ENCODE measurements at regions of chrX and their contacts with region 1.

Region 1: GRCh38 chrX:11724122-11725017 is 33.7 kb upstream of the MSL3 start:
- DNase-seq: peak in 1 of 2 donors; percentile 4
- ATAC-seq: no peak
- H3K4me3 ChIP-seq: no peak overlapping the region
- H3K27ac ChIP-seq: no peak overlapping the region
- H3K4me1 ChIP-seq: no peaks in the 10 kb centered on the region
- H3K27me3 ChIP-seq: peaks cover 0 to 11% (median 0%) of the 10 kb centered on the region in 7 donors
- CTCF ChIP-seq: peak; percentile 42 to 73 (median 64)

Region 2: GRCh38 chrX:11665144-11666111 is 58.9 kb before region 1 on chrX and contains the start of gene ARHGAP6:
- intact Hi-C with region 1: no loop called
- DNase-seq: peak; percentile 34 to 62
- ATAC-seq: peak; percentile 81 to 91 (median 87)
- H3K4me3 ChIP-seq: peak within 1 kb of the TSS; percentile 35 to 58 (median 50)
- H3K27ac ChIP-seq: peak within 1 kb of the TSS in 6 of 10 donors; percentile 10 to 50 (median 22)
- H3K4me1 ChIP-seq: peaks cover 0 to 3% (median 0%) of the 10 kb centered on the region in 9 donors
- H3K27me3 ChIP-seq: peaks cover 0 to 90% (median 4%) of the 10 kb centered on the region in 7 donors
- CTCF ChIP-seq: peak in 1 of 9 donors; percentile 10
- total RNA-seq, gene ARHGAP6: 1.6 to 6.0 (median 2.5) TPM

Region 3: GRCh38 chrX:11688201-11688600 is 36.2 kb before region 1 on chrX:
- intact Hi-C with region 1: no loop called
- DNase-seq: no peak
- ATAC-seq: no peak
- H3K4me3 ChIP-seq: no peak overlapping the region
- H3K27ac ChIP-seq: no peak overlapping the region
- H3K4me1 ChIP-seq: no peaks in the 10 kb centered on the region
- H3K27me3 ChIP-seq: peaks cover 0 to 18% (median 0%) of the 10 kb centered on the region in 7 donors
- CTCF ChIP-seq: no peak

Region 4: DNA sequence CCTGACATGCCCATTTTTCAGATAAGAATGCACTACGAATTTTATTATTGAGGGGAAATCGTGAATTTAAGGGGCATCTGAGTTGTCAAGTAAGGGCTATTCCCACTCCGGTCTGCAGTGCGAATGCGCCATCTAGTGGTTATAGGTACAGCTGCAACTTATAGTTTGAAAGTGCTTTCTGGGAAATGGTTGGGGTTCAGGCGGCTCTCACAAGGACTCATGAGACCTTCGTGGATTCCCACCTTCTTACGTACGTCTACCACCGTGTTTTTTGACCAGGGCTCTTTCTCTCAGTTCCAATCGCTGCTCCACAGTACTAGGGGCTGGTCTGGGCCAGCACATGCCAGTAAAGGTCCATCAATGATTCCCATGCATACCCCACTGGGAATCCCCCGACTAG is 46.0 kb after region 1 on chrX:
- intact Hi-C with region 1: loop called in 3 of 10 experiments (anchors 5 to 10 kb)
- DNase-seq: no peak
- ATAC-seq: peak in 7 of 8 donors; percentile 25 to 76 (median 63)
- H3K4me3 ChIP-seq: no peak overlapping the region
- H3K27ac ChIP-seq: no peak overlapping the region
- H3K4me1 ChIP-seq: peaks cover 0 to 7% (median 0%) of the 10 kb centered on the region in 9 donors
- H3K27me3 ChIP-seq: no peaks in the 10 kb centered on the region
- CTCF ChIP-seq: peak; percentile 47 to 88 (median 77)

Region 5: DNA sequence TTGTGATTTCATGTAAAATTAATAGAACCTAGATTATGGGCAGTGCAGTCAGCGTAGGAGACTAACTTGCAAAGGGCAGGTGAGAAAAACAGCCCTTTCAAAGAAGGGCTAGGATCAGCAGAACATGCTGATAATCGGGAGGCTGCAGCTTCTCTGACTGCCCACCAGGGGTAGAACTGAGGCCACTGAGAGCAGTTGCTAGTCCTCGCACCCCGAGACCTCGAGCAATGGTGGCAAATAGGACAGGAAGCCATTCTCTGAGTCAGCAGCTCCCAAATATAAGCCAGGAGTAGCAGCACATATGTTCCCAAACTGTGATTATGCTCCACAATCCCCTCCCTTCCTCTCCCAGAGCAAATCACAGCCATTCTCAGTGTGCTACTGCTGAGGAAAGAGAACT is 220.1 kb after region 1 on chrX:
- intact Hi-C with region 1: no loop called
- DNase-seq: no peak
- ATAC-seq: no peak
- H3K4me3 ChIP-seq: no peak overlapping the region
- H3K27ac ChIP-seq: no peak overlapping the region
- H3K4me1 ChIP-seq: no peaks in the 10 kb centered on the region
- H3K27me3 ChIP-seq: no peaks in the 10 kb centered on the region
- CTCF ChIP-seq: peak in 6 of 9 donors; percentile 27 to 46 (median 40)

Region 6: GRCh38 chrX:12026481-12026880 is 302.1 kb after region 1 on chrX:
- intact Hi-C with region 1: no loop called
- DNase-seq: no peak
- ATAC-seq: no peak
- H3K4me3 ChIP-seq: no peak overlapping the region
- H3K27ac ChIP-seq: no peak overlapping the region
- H3K4me1 ChIP-seq: no peaks in the 10 kb centered on the region
- H3K27me3 ChIP-seq: peaks cover 0 to 6% (median 0%) of the 10 kb centered on the region in 7 donors
- CTCF ChIP-seq: no peak